Heart right ventricle (tissue), 16 donors: ENCODE measurements at regions of chr4 and their contacts with region 1.

Region 1: GRCh38 chr4:142719854-142720541 is 126.1 kb downstream of the INPP4B start:
- DNase-seq: no peak
- ATAC-seq: no peak
- H3K4me3 ChIP-seq: no peak overlapping the region
- H3K27ac ChIP-seq: no peak overlapping the region
- H3K4me1 ChIP-seq: peaks cover 0 to 8% (median 0%) of the 10 kb centered on the region in 9 donors
- H3K27me3 ChIP-seq: no peaks in the 10 kb centered on the region
- CTCF ChIP-seq: peak; percentile 25 to 66 (median 55)

Region 2: GRCh38 chr4:142282870-142283431 is 437.0 kb before region 1 on chr4:
- intact Hi-C with region 1: loop called in 1 of 10 experiments (anchors 10 kb)
- DNase-seq: no peak
- ATAC-seq: no peak
- H3K4me3 ChIP-seq: no peak overlapping the region
- H3K27ac ChIP-seq: no peak overlapping the region
- H3K4me1 ChIP-seq: peaks cover 0 to 13% (median 0%) of the 10 kb centered on the region in 9 donors
- H3K27me3 ChIP-seq: no peaks in the 10 kb centered on the region
- CTCF ChIP-seq: peak; percentile 11 to 65 (median 54)

Region 3: DNA sequence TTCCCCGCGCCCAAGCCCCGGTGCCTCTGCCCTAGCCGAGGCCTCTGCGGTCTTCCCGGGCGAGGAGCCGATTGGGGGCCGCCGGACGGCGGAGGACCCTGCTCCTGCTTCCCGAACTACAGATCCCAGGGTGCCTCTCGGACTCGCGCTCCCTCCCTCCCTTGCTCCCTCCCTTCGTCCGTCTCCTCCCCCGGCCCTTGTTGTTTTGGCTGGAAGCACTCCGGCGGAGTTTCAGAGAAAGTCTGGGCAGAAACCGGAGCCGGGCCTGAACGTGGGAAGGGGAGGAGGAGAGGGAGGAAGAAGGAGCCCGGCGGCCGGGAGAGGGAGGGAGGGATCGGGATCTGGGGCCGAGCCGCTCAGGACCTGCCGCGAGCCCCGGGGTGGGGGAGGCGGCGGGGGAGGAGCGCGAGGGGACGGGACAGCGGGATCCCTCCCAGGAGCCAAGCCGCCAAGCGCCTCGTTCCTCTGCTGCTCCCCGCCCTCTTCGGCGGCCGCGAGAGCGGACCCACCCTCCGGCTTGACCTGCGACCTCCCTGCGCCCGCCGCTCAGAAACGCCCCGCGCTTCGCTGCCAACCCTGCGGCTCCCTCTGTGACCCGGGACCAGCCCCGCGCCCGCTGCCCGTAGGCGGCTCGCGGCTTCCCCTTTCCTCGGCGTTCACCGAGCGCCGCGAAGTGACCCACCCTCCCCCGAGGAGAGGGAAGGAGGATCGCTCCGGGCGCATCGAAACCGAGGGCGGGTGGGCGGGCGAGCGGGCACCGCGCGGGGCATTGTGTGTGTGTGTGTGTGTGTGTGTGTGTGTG is 616.2 kb after region 1 on chr4:
- intact Hi-C with region 1: no loop called
- DNase-seq: peak; percentile 91 to 93
- ATAC-seq: peak; percentile 90 to 95 (median 92)
- H3K4me3 ChIP-seq: peak overlapping the region; percentile 65 to 97 (median 90)
- H3K27ac ChIP-seq: peak overlapping the region; percentile 93 to 98 (median 96)
- H3K4me1 ChIP-seq: peaks cover 3 to 44% (median 33%) of the 10 kb centered on the region in 9 donors
- H3K27me3 ChIP-seq: no peaks in the 10 kb centered on the region
- CTCF ChIP-seq: no peak